Dorsolateral prefrontal cortex (tissue), 120 donors: ENCODE measurements at regions of chr10 and their contacts with region 1.

Region 1: GRCh38 chr10:122374237-122374869 is at the start of gene PLEKHA1:
- DNase-seq: peak; percentile 91 to 98 (median 94)
- H3K4me3 ChIP-seq: peak within 1 kb of the TSS; percentile 61 to 99 (median 86)
- H3K27ac ChIP-seq: peak within 1 kb of the TSS; percentile 89 to 99 (median 97)
- H3K27me3 ChIP-seq: no peaks in the 10 kb centered on the region
- CTCF ChIP-seq: peak in 33 of 56 donors; percentile 10 to 57 (median 29)
- total RNA-seq, gene PLEKHA1: 60.2 to 156 (median 112) TPM

Region 2: GRCh38 chr10:122298598-122299301 is 75.6 kb before region 1 on chr10:
- intact Hi-C with region 1: loop called in 1 of 2 experiments (anchors 2 kb)
- DNase-seq: peak in 9 of 10 donors; percentile 38 to 81 (median 76)
- H3K4me3 ChIP-seq: peak overlapping the region in 55 of 59 donors; percentile 6 to 66 (median 38)
- H3K27ac ChIP-seq: peak overlapping the region in 56 of 59 donors; percentile 38 to 100 (median 94)
- H3K27me3 ChIP-seq: no peaks in the 10 kb centered on the region
- CTCF ChIP-seq: peak; percentile 65 to 99 (median 96)

Region 3: DNA sequence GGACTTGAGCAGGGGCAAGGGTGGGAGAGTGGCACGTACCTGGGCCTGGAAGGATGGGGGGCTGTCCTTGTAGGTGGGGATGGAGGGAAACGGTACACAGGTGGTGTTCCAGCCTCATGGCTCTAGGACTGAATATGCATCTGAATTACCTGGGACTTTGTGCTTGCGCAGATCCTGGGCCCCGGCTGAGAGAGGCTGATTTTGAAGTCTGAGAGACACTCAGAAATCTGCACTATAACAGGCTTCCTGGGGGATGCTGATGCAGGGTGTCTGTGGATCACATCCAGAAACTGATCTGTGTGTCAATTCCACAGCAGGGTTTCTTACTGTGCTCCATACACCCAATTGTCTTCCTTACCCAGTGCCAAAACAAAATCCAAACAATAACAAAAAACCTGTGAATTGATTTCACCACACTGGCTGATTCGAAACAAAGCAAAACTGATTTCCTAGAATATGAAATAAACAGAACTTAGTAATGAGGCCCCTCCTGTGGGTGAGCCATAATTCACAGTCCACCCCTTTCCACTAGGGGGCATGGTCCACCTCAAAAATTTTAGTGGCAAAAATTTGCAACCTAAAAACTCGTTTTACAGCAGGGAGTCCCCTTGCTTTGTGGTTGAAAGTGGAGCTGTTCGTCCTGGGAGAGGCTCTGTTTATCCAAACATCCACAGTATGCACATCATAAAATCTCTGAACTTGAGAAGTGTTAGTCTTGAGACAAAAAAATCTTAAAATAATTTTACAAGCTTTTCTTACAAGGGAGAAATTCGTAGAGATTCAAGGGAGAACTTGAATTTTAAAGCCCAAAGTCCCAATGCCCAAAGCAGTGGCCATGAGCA is 31.8 kb before region 1 on chr10:
- intact Hi-C with region 1: loop called in 1 of 2 experiments (anchors 5 kb)
- DNase-seq: peak in 4 of 10 donors; percentile 9 to 63 (median 40)
- H3K4me3 ChIP-seq: no peak overlapping the region
- H3K27ac ChIP-seq: peak overlapping the region in 57 of 59 donors; percentile 3 to 98 (median 78)
- H3K27me3 ChIP-seq: no peaks in the 10 kb centered on the region
- CTCF ChIP-seq: peak; percentile 75 to 95 (median 90)

Region 4: DNA sequence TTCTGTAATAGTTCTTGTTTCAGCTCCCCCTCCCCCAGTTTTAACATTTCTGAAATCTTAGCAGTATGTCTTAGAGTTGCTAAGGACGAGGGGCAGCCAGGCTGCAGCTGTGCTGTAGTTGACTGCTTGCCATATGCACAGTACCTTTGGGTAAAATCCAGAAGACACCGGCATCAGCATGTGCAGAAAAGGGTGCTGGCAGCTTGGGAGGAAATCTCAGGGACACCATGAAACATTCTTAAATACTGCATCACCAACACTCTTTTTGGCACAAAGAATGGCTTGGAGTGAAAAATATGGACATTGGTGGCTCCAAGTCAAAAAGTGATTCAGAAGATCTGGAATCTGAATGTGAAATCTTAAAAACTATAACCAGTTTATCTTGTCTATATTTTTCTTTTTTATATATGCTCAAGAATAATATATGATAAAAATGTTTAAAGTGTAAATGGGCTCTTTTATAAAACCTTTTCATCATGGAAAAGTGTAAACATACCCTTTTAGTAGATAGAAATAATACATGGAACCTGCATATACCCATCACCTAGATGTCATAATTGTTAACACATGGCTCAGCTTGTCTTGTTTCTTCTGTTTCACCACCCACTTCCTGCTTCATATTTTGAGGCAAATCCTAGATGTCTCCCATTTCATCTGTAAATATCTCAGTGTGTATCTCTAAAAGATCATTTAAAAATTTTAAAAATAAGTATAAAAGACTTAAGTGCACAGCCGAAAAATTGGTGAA is 45.7 kb after region 1 on chr10:
- intact Hi-C with region 1: loop called in 1 of 2 experiments (anchors 5 kb)
- DNase-seq: peak in 4 of 10 donors; percentile 17 to 61 (median 42)
- H3K4me3 ChIP-seq: no peak overlapping the region
- H3K27ac ChIP-seq: peak overlapping the region in 51 of 59 donors; percentile 4 to 84 (median 63)
- H3K27me3 ChIP-seq: no peaks in the 10 kb centered on the region
- CTCF ChIP-seq: no peak

Region 5: DNA sequence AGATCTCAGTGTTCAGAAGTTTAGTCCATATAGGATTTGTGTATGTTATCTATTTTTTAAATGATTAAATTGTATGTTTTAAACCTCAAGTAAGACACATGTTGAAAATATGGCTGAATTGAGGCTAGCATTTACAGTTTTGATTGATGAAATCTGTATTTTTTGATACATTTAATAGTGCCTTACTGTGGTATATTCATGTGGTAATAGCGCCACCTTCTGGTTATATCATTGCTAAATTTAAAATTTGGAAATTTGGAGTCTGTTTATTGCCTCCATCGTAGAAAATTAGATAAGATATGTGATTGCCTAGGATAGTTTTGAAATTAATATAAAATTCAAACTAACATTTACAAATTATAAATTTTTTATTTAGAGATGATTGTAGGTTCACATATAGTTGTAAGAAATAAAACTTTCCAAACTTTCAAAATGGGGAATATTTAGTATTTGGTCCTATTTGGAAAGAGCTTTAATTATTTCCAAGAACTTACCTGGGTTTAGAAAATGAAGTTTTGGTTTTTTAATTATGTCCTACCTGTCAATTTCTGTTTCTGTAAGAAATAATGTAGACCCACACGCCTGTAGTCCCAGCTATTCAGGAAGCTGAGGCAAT is 61.0 kb after region 1 on chr10:
- intact Hi-C with region 1: loop called in 1 of 2 experiments (anchors 5 kb)
- DNase-seq: no peak
- H3K4me3 ChIP-seq: no peak overlapping the region
- H3K27ac ChIP-seq: peak overlapping the region in 31 of 59 donors; percentile 2 to 71 (median 30)
- H3K27me3 ChIP-seq: no peaks in the 10 kb centered on the region
- CTCF ChIP-seq: peak; percentile 71 to 96 (median 85)

Region 6: GRCh38 chr10:122461367-122461728 is 87.0 kb after region 1 on chr10 and contains the start of gene HTRA1:
- intact Hi-C with region 1: loop called in 1 of 2 experiments (anchors 5 kb)
- DNase-seq: peak; percentile 40 to 92 (median 84)
- H3K4me3 ChIP-seq: peak within 1 kb of the TSS; percentile 49 to 94 (median 84)
- H3K27ac ChIP-seq: peak within 1 kb of the TSS; percentile 74 to 98 (median 92)
- H3K27me3 ChIP-seq: no peaks in the 10 kb centered on the region
- CTCF ChIP-seq: no peak
- total RNA-seq, gene HTRA1: 154 to 492 (median 263) TPM

Region 7: GRCh38 chr10:122624546-122624945 is 250.2 kb after region 1 on chr10:
- intact Hi-C with region 1: no loop called
- DNase-seq: no peak
- H3K4me3 ChIP-seq: no peak overlapping the region
- H3K27ac ChIP-seq: no peak overlapping the region
- H3K27me3 ChIP-seq: no peaks in the 10 kb centered on the region
- CTCF ChIP-seq: no peak